ENCODE measurements at regions of chr9 and their contacts with region 1.

Region 1: DNA sequence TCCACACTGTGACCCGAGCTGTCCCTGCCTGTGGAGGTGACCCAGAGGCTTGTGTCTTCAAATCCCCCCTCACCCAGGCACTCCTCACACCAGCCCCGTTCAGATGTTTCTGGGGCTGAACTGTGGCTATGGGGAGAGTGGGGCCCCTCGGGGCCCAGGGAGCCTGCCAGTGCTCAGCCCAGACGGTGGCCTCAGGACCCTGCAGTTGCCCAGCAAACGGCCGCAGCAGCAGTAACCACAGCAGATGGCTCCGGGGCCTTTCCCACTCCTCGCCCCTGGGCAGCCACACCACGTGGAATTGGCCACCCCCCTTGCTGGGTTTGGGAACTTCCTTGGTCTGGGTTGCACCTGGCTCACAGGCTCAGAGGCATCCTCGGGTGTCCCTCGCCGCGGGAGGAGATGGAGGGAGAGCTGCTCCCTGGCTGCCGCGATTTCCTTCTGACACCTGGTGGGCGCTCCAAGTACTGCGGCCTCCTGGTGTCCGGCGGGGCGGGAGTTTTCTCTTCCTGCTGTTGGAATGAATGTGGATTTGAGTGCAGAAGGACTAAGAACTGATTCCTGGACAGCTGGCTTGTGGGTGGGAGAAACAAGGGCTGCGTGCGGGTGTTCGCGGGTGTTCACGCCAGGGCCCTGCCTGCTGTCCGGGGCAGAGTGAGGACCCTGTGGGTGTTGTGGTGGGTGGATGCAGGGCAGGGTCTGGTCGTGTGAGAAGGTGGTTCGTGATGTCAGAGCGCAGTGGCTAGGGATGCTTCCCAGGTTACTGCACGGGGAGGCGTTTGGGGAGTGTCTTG is 97.5 kb downstream of the COL5A1 start:
- DNase-seq: peak; percentile 90

Region 2: DNA sequence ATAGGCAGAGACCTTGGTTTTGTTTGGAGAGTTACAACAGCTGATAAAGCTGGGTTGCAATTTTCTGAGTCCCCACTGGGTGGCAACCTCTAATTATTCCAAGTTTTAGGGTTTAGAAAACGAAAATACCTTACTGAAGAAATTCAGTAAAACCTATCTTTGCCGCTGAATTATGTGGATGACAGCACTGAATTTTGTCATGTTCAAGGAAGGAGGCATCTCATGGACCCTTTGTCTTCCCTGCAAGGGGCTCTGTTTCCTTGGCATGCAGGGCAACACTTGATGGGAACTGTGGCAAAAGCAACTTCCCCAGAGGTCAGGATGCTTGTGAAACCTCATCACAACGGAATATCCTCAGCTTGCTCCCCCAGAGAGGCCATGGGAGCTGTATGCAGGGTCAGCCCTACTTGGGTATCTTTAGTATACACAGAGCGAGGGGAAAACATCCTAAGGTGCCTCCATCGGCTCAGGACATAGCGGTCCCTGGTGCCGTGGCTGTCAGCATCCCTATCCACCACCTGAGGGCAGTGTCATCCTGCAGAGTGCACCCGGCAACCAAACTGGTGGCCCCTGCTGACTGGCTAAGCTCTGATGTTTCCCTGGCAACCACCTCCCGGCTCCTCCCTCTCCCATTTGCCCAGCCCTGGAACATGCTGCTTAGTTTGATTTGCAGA is 289.7 kb before region 1 on chr9:
- intact Hi-C with region 1: loop called (anchors 5 kb)
- DNase-seq: peak; percentile 96

Region 3: DNA sequence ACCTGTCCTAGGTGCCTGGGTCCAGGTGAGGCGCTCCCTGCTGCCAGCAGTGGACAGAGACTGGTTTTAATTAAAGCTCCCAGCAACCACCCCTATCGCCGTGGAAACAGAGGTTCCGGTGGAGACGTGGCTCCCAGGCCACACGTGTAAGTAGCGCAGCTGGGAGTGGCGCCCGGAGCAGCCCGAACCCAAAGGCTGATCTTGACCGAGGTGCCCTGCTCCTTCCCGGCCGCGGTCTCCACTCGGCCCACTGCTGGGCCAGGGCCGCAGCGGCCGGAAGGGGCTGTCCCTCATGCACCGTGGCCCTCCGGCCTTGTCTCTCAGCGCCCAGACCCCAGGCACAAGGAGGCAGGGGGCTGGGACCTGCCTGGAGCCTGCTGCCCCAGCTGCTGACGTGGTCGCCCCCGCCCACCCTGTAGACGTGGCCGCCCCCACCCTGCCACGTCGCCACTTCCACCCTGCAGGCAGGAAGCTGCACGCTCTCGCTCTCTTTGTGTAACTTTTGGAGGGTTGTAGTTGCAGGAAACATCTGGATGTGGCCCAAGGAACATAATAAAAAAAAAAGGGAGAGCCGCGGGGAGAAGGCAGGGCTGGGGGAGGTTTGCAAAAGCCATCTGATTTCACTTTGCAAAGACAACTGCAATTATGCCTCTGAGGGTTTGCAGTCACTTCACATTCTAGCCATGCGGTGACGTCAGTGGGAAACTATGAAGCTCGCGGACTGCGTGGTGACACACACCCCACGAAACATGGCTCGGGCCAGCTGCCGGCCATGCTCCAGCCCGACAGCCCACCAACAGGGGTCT is 282.9 kb before region 1 on chr9:
- intact Hi-C with region 1: loop called in 1 of 2 experiments (anchors 5 kb)
- DNase-seq: peak; percentile 96

Region 4: DNA sequence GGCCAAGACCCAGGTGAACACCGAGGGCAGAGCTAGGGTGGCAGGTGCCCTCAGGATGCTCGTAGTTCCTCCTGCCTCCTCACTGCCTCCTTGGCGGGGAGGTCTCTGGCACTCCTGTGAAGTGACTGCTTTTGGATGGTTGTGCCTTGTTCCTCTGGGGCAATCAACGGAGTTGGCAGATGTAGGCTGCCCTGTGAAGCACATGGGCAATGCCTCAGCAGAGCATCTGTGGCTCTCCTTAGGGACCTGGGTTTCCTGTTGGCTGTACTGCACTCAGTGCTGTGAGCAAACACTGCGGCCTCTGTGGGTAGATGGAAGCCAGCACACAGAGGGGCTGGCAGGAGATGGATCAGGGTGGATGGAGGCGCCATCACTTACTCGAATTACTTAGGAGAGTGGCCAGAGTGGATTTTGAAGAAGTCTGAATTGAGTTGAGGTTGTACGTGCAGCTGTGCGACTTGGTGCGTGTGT is 168.9 kb before region 1 on chr9:
- intact Hi-C with region 1: no loop called
- DNase-seq: peak; percentile 78

Region 5: DNA sequence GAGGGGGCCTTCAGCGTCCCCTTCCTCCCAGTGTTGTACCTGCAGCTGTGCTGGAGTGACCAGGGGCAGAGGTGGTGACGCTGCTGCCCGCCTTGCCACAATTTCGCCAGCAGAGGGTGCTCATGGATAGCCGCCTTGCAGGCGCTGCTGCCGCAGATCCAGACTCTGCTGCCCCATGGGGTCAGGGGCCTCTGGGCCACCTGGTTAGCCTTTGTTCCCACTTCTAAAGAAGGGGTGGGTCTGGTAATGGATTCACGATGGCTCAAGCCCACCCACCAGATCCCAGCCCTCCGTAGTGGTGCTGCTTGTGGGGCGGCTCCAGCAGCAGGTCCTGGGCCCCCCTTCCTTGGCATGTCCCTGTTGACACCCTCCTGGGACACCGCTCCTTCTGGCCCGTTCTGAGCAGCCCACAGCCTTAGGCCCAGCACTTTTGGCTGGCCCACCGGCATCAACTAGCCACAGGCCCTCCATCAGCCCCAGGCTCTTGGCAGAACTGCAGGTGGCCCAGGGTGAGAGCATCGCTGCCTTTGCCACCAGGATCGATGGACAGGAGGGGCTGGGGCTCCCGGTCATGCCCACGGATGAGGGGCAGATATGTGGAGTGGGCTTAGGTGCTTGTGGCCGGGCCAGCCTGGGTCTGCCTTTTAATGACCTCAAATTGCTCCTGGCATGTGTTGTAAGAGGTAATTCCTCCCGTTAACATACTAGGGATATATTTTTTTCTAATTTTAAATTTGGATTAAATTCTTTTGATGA is 40.3 kb before region 1 on chr9:
- intact Hi-C with region 1: loop called (anchors 2 to 5 kb)
- DNase-seq: peak; percentile 91

Region 6: GRCh38 chr9:134704498-134704897 is 34.6 kb before region 1 on chr9:
- intact Hi-C with region 1: loop called (anchors 2 to 5 kb)
- DNase-seq: no peak

Region 7: GRCh38 chr9:134768709-134769351 is 29.8 kb after region 1 on chr9:
- intact Hi-C with region 1: no loop called
- DNase-seq: peak; percentile 93

Region 8: DNA sequence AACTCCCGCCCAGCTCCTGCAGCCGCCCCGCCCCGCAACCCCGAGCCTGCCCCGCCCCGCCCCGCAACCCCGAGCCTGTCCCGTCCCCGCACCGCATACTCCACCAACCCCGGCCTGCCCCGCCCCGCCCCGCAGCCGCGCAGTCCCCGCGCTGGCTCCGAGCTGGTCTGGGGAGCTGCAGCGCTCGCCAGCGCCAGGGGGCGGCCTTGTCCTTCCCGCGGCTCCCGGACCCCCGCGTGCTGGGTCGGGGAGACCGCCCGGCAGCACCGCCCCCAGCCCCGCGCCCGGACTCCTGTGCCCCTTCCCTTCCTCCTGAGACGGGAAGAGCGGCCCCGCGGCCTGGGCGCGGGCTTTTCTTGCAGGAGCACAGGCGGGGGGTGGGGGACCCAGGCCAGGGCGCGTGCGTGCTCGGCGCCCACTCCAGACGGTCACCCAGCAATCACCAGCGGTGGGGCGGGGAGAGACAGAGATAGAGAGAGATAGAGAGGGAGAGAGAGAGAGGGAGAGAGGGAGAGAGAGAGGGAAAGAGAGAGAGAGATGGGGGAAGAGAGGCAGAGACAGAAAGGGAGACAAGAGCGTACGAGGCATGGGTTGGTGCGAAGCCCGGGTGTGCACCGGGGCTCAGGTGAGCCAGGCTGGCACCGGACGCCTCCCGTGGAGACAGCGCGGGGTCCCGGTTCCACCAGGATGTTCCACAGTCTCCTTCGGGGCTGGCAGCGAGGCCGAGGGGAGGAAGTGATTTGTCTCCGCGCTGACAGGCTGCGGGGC is 1394.3 kb after region 1 on chr9:
- intact Hi-C with region 1: no loop called
- DNase-seq: no peak

Measured in posterior vena cava (tissue), 2 donors.